Endothelial cell of umbilical vein (primary cell): ENCODE measurements at regions of chr1 and their contacts with region 1.

Region 1: DNA sequence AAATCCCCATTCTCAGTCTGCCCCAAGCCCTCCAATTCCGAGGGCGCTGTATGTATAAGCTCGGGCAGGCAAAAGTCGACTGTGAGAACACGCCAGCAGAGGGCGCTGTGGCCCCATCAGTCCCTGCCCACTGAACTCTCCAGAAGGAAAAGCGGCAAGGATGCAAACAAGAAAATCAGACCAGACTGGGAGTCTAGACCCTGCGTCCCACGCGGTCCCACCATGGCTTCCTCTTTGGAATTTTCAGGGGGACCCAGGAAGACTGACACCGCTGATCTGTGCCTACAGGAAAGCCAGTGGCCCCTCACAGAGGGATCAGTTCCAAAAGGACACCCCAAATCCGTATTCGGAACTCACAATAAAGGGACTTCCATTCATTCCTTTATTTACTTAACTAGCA is 19.5 kb downstream of the TEX35 start:
- DNase-seq: peak; percentile 82
- H3K4me3 ChIP-seq: no peak overlapping the region
- H3K27ac ChIP-seq: no peak overlapping the region
- H3K4me1 ChIP-seq: no peaks in the 10 kb centered on the region
- H3K27me3 ChIP-seq: no peaks in the 10 kb centered on the region
- CTCF ChIP-seq: peak; percentile 87 to 89
- POLR2A ChIP-seq: no peak

Region 2: DNA sequence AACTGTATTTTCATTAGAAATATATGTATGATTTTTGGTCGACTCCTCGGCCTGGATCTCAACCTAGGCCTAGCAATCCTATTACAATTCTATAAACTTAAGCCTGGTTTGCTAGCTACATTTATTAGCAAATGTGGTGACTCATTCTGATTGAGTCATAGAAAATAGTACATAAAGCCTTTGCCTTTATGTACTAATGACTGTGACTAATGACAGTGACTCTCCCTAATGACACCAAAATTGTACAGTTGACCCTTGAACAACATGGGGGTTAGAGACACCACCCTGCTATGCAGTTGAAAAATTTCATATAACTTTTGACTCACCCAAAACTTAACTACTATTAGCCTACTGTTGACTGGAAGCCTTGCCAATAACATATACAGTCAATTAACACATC is 114.5 kb before region 1 on chr1:
- CTCF ChIA-PET with region 1: no interaction called
- POLR2A ChIA-PET with region 1: no interaction called
- dilution Hi-C with region 1: no loop called
- intact Hi-C with region 1: no loop called
- DNase-seq: peak; percentile 45
- H3K4me3 ChIP-seq: no peak overlapping the region
- H3K27ac ChIP-seq: no peak overlapping the region
- H3K4me1 ChIP-seq: no peaks in the 10 kb centered on the region
- H3K27me3 ChIP-seq: no peaks in the 10 kb centered on the region
- CTCF ChIP-seq: no peak
- POLR2A ChIP-seq: no peak

Region 3: GRCh38 chr1:178520783-178521182 is 11.6 kb before region 1 on chr1:
- CTCF ChIA-PET with region 1: interaction called, 13 read pairs
- POLR2A ChIA-PET with region 1: no interaction called
- dilution Hi-C with region 1: no loop called
- intact Hi-C with region 1: no loop called
- DNase-seq: no peak
- H3K4me3 ChIP-seq: no peak overlapping the region
- H3K27ac ChIP-seq: no peak overlapping the region
- H3K4me1 ChIP-seq: no peaks in the 10 kb centered on the region
- H3K27me3 ChIP-seq: peaks cover 0 to 3% of the 10 kb centered on the region in 2 experiments
- CTCF ChIP-seq: no peak
- POLR2A ChIP-seq: no peak

Region 4: GRCh38 chr1:179081687-179082332 is 549.4 kb after region 1 on chr1 and contains the start of gene TOR3A:
- CTCF ChIA-PET with region 1: no interaction called
- POLR2A ChIA-PET with region 1: no interaction called
- dilution Hi-C with region 1: no loop called
- intact Hi-C with region 1: loop called (anchors 5 kb)
- DNase-seq: peak; percentile 89
- H3K4me3 ChIP-seq: peak within 1 kb of the TSS; percentile 68 to 80 (median 77)
- H3K27ac ChIP-seq: peak within 1 kb of the TSS; percentile 62
- H3K4me1 ChIP-seq: peaks cover 14% of the 10 kb centered on the region
- H3K27me3 ChIP-seq: no peaks in the 10 kb centered on the region
- CTCF ChIP-seq: no peak
- POLR2A ChIP-seq: peak; percentile 88
- total RNA-seq, gene TOR3A: 16.7 and 22.4 TPM in 2 replicates